A549 (cell line): ENCODE measurements at regions of chr1 and their contacts with region 1.

Region 1: GRCh38 chr1:1059494-1060280 is 14.4 kb downstream of the RNF223 start:
- DNase-seq: peak; percentile 61 to 68
- ATAC-seq: peak; percentile 54 to 72
- H3K4me3 ChIP-seq: peak overlapping the region; percentile 74
- H3K27ac ChIP-seq: peak overlapping the region; percentile 79 to 97; a peak in 5 of 6 replicates
- H3K4me1 ChIP-seq: peaks cover 41% of the 10 kb centered on the region
- CTCF ChIP-seq: no peak; the same call in 1 of the 3 replicates
- EP300 ChIP-seq: no peak
- POLR2A ChIP-seq: no peak
- RAD21 ChIP-seq: no peak

Region 2: GRCh38 chr1:951364-951763 is 108.3 kb before region 1 on chr1:
- CTCF ChIA-PET with region 1: no interaction called
- POLR2A ChIA-PET with region 1: no interaction called
- DNase-seq: peak in 1 of 2 experiments; percentile 46
- ATAC-seq: peak in 1 of 2 experiments; percentile 70; a peak in 3 of 6 replicates
- H3K4me3 ChIP-seq: no peak overlapping the region
- H3K27ac ChIP-seq: no peak overlapping the region
- H3K4me1 ChIP-seq: no peaks in the 10 kb centered on the region
- CTCF ChIP-seq: peak; percentile 18; the same call in 1 of the 3 replicates
- EP300 ChIP-seq: no peak
- POLR2A ChIP-seq: no peak
- RAD21 ChIP-seq: no peak

Region 3: GRCh38 chr1:999725-1000356 is 59.8 kb before region 1 on chr1 and contains the start of gene HES4:
- CTCF ChIA-PET with region 1: interaction called, 33 read pairs
- POLR2A ChIA-PET with region 1: interaction called, 5 read pairs
- DNase-seq: peak in 1 of 2 experiments; percentile 92
- ATAC-seq: peak; percentile 51 to 52
- H3K4me3 ChIP-seq: peak within 1 kb of the TSS; percentile 77
- H3K27ac ChIP-seq: peak within 1 kb of the TSS; percentile 97 to 100
- H3K4me1 ChIP-seq: peaks cover 17% of the 10 kb centered on the region
- CTCF ChIP-seq: no peak
- EP300 ChIP-seq: no peak
- POLR2A ChIP-seq: peak; percentile 86
- RAD21 ChIP-seq: no peak
- polyA plus RNA-seq, gene HES4: 4.2 and 5.9 TPM in 2 replicates

Region 4: DNA sequence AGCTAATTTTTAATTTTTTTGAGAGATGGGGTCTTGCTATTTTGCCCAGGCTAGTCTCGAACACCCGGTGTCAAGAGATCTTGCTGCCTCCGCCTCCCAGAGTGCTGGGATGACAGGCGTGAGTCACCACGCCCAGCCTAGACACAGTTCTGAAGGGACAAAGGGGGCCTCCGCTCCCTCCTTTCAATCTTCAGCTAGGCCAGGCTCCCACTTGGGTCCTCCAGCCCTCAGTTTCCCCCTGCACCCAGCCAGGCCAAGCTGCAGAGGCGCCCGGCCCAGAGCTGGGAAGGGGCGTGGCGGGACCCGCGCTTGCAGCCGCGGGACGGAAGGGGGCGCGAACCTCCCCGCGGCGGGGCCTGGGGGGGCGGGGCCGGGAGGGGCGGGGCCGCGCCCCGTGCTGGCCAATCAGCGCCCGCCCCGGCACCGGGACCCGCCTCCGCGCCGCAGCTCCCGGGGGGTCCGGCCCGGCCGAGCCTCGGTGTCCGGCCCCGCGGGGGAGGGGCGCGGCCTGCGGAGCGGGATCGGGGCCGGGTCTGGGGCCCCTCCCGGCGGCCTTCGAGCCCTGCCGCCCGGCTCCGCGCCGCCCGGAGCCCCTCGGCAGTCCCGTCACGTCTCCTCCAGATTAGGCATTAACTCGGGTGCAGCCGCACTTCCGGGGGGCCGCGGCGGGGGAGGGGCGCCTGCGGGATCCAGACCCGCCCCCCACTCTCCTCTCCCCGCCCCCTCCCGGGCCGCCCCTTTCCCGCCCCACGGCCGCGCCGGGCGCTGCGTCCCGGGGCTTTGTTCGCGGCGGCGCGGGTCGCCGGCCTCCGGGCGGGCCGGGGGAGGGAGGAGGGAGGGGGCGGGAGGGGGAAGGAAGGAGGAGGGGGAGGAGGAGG is 40.3 kb before region 1 on chr1:
- CTCF ChIA-PET with region 1: interaction called, 92 read pairs
- POLR2A ChIA-PET with region 1: interaction called, 8 read pairs
- DNase-seq: peak in 1 of 2 experiments; percentile 87
- ATAC-seq: peak; percentile 59
- H3K4me3 ChIP-seq: peak overlapping the region; percentile 86
- H3K27ac ChIP-seq: peak overlapping the region; percentile 98
- H3K4me1 ChIP-seq: peaks cover 33% of the 10 kb centered on the region
- CTCF ChIP-seq: peak; percentile 42; the same call in 2 of the 3 replicates
- EP300 ChIP-seq: peak in 1 of 2 experiments; percentile 30; a peak in 1 of 5 replicates
- POLR2A ChIP-seq: no peak
- RAD21 ChIP-seq: no peak; a peak in 1 of 5 replicates

Region 5: DNA sequence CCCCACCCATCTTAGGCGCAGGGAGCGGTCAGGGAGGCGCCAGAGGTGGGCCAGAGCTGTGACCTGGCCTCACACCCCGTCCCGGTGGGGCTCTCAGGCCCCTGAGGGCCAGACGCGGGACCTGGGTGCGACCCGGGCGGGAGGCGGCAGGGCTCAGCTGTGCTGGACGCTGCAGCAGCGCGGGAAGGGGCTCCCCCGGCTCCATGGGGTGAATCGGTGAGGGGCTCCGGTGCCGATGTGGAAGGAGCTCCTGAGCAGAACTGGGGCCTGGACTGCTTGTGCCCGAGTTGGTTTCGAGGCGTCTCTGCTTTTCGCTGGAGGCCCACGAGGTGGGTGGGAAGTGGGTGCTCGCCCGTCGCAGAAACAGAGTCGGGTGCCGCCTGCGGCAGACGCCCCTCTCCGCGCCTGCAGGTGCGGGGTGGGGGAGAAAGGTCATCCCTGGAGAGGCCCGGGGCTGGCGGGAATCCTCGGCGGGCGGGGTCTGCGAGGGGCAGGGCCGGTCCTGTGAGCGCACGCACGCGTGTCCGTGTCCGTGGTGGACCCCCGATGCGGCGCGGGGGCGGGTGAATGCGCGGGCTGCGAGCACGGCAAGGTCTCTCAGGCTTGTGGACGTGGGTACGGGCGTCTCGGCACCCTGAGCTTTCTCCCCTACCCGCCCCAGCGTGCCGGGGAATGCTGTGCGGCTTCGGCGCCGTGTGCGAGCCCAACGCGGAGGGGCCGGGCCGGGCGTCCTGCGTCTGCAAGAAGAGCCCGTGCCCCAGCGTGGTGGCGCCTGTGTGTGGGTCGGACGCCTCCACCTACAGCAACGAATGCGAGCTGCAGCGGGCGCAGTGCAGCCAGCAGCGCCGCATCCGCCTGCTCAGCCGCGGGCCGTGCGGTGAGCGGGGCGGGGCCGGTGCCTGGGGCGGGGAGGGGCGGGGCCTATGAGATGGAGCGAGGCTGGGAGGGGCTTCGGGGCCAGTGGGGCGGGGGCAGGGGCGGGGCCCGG is 19.4 kb before region 1 on chr1:
- CTCF ChIA-PET with region 1: interaction called, 32 read pairs
- POLR2A ChIA-PET with region 1: no interaction called
- DNase-seq: peak in 1 of 2 experiments; percentile 74
- ATAC-seq: peak; percentile 58 to 79
- H3K4me3 ChIP-seq: no peak overlapping the region
- H3K27ac ChIP-seq: peak overlapping the region in 1 of 2 experiments; percentile 74; a peak in 4 of 6 replicates
- H3K4me1 ChIP-seq: peaks cover 9% of the 10 kb centered on the region
- CTCF ChIP-seq: no peak
- EP300 ChIP-seq: no peak
- POLR2A ChIP-seq: no peak
- RAD21 ChIP-seq: no peak

Region 6: DNA sequence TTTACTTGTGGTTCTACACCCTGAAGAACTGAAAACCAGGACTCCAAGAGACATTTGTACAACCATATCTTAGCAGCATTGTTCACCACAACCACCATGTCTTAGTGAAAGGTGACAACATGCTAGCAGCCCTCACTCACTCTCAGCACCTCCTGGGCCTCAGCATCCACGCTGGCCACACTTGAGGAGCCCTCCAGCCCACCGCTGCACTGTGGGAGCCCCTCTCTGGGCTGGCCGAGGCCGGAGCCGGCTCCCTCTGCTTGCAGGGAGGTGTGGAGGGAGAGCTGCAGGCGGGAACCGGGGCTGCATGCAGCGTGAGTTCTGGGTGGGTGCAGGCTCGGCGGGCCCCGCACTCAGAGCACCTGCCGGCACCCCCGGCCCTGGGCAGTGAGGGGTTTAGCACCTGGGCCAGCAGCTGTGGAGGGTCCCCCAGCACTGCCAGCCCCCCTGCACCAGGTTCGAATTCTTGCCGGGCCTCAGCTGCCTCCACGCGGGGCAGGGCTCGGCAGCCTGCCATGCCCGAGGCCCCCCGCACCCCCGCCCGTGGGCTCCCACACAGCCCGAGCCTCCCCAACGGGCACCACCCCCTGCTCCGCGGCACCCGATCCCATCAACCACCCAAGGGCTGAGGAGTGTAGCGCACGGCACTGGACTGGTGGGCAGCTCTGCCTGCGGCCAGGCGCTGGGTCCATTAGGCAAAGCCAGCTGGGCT is 47.0 kb after region 1 on chr1:
- CTCF ChIA-PET with region 1: no interaction called
- POLR2A ChIA-PET with region 1: no interaction called
- DNase-seq: no peak
- ATAC-seq: no peak
- H3K4me3 ChIP-seq: no peak overlapping the region
- H3K27ac ChIP-seq: no peak overlapping the region
- H3K4me1 ChIP-seq: no peaks in the 10 kb centered on the region
- CTCF ChIP-seq: no peak
- EP300 ChIP-seq: no peak
- POLR2A ChIP-seq: no peak
- RAD21 ChIP-seq: no peak

Region 7: GRCh38 chr1:2391041-2391930 is 1331.6 kb after region 1 on chr1 and contains the starts of genes MORN1 and RER1:
- CTCF ChIA-PET with region 1: no interaction called
- POLR2A ChIA-PET with region 1: no interaction called
- DNase-seq: peak; percentile 84 to 97
- ATAC-seq: peak; percentile 97
- H3K4me3 ChIP-seq: peak within 1 kb of the TSS; percentile 100
- H3K27ac ChIP-seq: peak within 1 kb of the TSS; percentile 98
- H3K4me1 ChIP-seq: peaks cover 25% of the 10 kb centered on the region
- CTCF ChIP-seq: no peak
- EP300 ChIP-seq: no peak
- POLR2A ChIP-seq: peak; percentile 65
- RAD21 ChIP-seq: no peak
- polyA plus RNA-seq, gene MORN1: 6.9 and 7.2 TPM in 2 replicates
- polyA plus RNA-seq, gene RER1: 213 and 227 TPM in 2 replicates